HCT116 (cell line): ENCODE measurements at regions of chr6 and their contacts with region 1.

Region 1: DNA sequence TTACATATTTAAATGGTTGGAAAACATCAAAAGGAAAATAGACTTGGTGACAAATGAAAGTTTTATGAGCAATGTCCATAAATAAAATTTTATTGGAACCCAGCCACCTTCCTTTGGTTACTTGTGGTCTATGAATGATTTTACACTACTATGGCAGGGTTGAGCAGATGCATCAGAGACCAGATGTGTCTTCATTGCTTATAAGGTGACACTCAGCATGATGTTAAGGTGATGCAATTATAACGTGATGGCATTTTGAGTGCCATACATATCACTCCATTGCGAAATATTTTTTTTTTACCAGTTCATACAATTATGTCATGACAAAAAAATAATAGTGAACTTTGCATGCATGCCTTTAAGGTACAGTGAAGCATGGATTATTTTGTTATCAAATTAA is 96.1 kb downstream of the ADTRP start:
- DNase-seq: no peak
- ATAC-seq: no peak
- H3K4me3 ChIP-seq: no peak overlapping the region
- H3K27ac ChIP-seq: no peak overlapping the region
- H3K4me1 ChIP-seq: peaks cover 0 to 20% of the 10 kb centered on the region in 2 experiments; a peak in 3 of 4 replicates
- H3K27me3 ChIP-seq: no peaks in the 10 kb centered on the region
- CTCF ChIP-seq: no peak
- POLR2A ChIP-seq: no peak
- RAD21 ChIP-seq: no peak

Region 2: DNA sequence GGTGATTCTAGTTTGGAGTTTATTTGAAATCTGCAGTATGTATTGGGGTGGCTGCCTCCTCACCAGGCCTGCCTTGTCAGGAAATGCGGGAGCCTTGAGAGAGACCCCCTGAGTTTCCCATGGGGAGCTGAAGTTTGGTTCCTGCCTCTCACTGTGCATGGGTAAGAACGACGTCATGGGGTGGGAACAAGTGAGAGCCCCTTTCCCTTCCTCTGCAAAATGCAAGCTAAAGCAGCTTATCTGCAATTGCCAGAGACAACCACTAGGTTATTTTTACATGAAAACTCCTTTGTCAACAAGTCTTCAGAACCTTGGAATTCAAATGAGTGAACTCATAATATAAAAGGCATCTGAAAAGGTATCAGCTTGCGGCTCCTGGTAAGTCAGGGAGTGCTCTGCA is 86.6 kb before region 1 on chr6:
- CTCF ChIA-PET with region 1: no interaction called
- POLR2A ChIA-PET with region 1: no interaction called
- RAD21 ChIA-PET with region 1: no interaction called
- intact Hi-C with region 1: no loop called
- DNase-seq: no peak
- ATAC-seq: no peak; the same call in 1 of the 2 replicates
- H3K4me3 ChIP-seq: no peak overlapping the region
- H3K27ac ChIP-seq: no peak overlapping the region
- H3K4me1 ChIP-seq: no peaks in the 10 kb centered on the region
- H3K27me3 ChIP-seq: no peaks in the 10 kb centered on the region
- CTCF ChIP-seq: peak in 2 of 3 experiments; percentile 31 to 33; a peak in 3 of 6 replicates
- POLR2A ChIP-seq: no peak
- RAD21 ChIP-seq: no peak

Region 3: DNA sequence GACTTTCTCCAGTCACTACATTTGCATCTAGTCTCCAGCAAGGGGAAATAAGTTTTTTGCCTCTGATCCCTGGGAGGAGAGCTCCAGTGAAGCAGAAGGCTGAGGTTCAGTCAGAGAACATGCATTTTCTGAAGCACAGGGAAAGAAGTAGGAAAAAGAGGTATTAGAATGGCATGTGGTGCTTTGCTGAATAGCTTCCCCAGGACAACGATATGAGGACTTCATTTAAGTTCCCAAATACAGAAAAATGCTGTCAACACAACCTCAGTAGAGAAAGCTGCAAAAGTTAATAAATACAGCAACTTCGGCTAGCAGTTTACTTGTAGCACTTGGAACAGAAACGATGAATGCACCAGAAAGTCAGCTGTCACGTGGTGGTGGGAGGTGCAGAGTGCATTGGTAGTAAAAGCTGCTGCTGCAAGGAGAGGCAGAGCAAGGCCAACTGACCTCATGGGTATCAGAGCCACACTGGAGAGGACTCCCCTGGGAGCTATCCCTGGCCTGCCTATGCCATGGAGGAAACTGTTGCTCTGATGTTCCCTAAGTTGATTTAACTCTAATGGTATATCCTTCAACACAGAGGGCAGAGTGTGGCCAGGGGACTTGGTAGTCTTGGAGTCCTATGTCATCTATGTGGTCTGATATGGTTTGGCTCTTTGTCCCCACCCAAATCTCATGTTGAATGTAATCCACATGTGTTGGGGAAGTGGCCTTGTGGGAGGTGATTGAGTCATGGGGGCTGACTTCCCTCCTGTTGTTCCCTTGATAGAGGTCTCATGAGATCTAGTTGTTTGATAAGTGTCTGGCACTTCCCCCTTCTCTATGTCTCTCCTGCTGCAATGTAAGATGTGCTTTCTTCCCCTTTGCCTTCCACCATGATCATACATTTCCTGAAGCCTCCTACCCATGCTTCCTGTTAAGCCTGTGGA is 10.2 kb after region 1 on chr6:
- CTCF ChIA-PET with region 1: no interaction called
- POLR2A ChIA-PET with region 1: no interaction called
- RAD21 ChIA-PET with region 1: no interaction called
- intact Hi-C with region 1: no loop called
- DNase-seq: no peak
- ATAC-seq: no peak
- H3K4me3 ChIP-seq: no peak overlapping the region
- H3K27ac ChIP-seq: no peak overlapping the region
- H3K4me1 ChIP-seq: no peaks in the 10 kb centered on the region
- H3K27me3 ChIP-seq: no peaks in the 10 kb centered on the region
- CTCF ChIP-seq: no peak
- POLR2A ChIP-seq: no peak
- RAD21 ChIP-seq: no peak

Region 4: GRCh38 chr6:12060780-12061619 is 378.5 kb after region 1 on chr6:
- CTCF ChIA-PET with region 1: no interaction called
- POLR2A ChIA-PET with region 1: no interaction called
- RAD21 ChIA-PET with region 1: no interaction called
- intact Hi-C with region 1: no loop called
- DNase-seq: no peak
- ATAC-seq: no peak
- H3K4me3 ChIP-seq: no peak overlapping the region
- H3K27ac ChIP-seq: no peak overlapping the region
- H3K4me1 ChIP-seq: no peaks in the 10 kb centered on the region
- H3K27me3 ChIP-seq: no peaks in the 10 kb centered on the region
- CTCF ChIP-seq: no peak
- POLR2A ChIP-seq: no peak
- RAD21 ChIP-seq: no peak

Region 5: DNA sequence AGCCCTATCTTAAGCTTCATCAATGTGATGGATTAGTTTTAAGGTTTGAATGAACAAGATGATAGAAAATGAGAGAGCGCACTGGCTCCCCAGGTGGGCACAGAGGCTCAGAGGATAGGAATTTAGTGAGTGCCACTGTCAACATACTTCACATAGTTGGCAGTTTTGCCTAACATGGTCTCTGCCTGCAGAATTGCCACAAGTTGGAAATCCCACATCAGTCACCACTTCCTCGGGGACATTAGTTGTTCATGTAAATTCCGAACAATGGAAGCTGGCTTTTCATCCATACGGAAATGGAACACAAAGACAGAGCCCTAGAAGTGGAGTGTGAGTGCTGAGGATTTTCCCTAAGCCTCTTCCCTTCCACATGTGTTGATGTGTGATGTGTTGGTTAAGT is 910.1 kb after region 1 on chr6:
- CTCF ChIA-PET with region 1: no interaction called
- POLR2A ChIA-PET with region 1: no interaction called
- RAD21 ChIA-PET with region 1: no interaction called
- intact Hi-C with region 1: loop called (anchors 2 kb)
- DNase-seq: no peak
- ATAC-seq: peak; percentile 78; the same call in 1 of the 2 replicates
- H3K4me3 ChIP-seq: no peak overlapping the region
- H3K27ac ChIP-seq: no peak overlapping the region
- H3K4me1 ChIP-seq: peaks cover 0 to 10% of the 10 kb centered on the region in 2 experiments; a peak in 2 of 4 replicates
- H3K27me3 ChIP-seq: no peaks in the 10 kb centered on the region
- CTCF ChIP-seq: no peak
- POLR2A ChIP-seq: no peak
- RAD21 ChIP-seq: no peak